B cell (primary cell): ENCODE measurements at regions of chr17 and their contacts with region 1.

Region 1: GRCh38 chr17:3845621-3846441 is at the start of gene NCBP3:
- DNase-seq: peak; percentile 96
- ATAC-seq: peak; percentile 97
- H3K4me3 ChIP-seq: peak within 1 kb of the TSS; percentile 54 to 96 (median 90)
- H3K4me3 Mint-ChIP-seq: peak within 1 kb of the TSS; percentile 92
- H3K27ac ChIP-seq: peak within 1 kb of the TSS; percentile 72 to 94
- H3K27ac Mint-ChIP-seq: peak within 1 kb of the TSS; percentile 86
- H3K4me1 ChIP-seq: peaks cover 10 to 20% of the 10 kb centered on the region in 2 donors
- H3K4me1 Mint-ChIP-seq: peaks cover 23% of the 10 kb centered on the region
- H3K27me3 ChIP-seq: no peaks in the 10 kb centered on the region
- H3K27me3 Mint-ChIP-seq: no peaks in the 10 kb centered on the region
- CTCF ChIP-seq: peak; percentile 90
- total RNA-seq, gene NCBP3: 70.7 and 71.7 TPM in 2 replicates

Region 2: DNA sequence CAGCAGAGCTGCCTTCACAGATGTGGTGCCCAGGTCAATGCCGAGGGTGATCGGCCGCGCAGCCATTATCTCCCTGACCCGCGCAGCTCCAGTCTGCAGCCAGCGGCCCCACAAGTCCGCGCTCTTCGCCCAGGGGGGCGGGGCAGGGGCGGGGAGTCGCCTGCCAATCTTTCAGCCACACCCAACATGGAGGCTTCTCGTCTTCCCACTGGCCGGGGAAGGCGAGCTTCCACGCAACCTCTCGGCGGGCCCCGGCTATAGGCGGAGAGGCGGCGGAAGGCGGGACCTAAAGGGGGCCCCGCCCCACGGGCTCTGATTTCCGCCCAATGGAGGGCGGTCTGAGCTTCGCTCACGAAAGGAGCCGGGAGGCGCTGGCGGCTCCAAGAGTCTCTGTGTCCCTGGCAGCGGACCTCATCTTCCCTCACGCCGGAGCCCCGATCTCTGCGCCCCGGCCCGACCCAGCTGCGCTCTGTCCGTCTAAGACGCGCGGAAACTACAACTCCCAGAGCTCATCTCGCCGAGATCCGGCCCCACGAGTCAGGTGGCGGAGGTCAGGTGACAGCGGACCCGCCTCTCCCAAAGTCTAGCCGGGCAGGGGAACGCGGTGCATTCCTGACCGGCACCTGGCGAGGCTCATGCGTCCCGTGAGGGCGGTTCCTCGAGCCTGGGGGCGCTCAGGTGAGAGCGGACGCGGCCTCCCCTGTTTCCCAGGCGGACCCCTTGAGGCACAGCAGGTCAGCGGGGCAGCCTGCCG is 209.5 kb before region 1 on chr17 and contains the starts of genes CTNS and SHPK:
- CTCF ChIA-PET with region 1: interaction called, 4 read pairs
- POLR2A ChIA-PET with region 1: no interaction called
- intact Hi-C with region 1: loop called (anchors 1 kb)
- DNase-seq: peak; percentile 97
- ATAC-seq: peak; percentile 97
- H3K4me3 ChIP-seq: peak within 1 kb of the TSS; percentile 48 to 80 (median 76)
- H3K4me3 Mint-ChIP-seq: peak within 1 kb of the TSS; percentile 99
- H3K27ac ChIP-seq: peak within 1 kb of the TSS; percentile 90 to 97
- H3K27ac Mint-ChIP-seq: peak within 1 kb of the TSS; percentile 100
- H3K4me1 ChIP-seq: peaks cover 4 to 15% of the 10 kb centered on the region in 2 donors
- H3K4me1 Mint-ChIP-seq: peaks cover 34% of the 10 kb centered on the region
- H3K27me3 ChIP-seq: no peaks in the 10 kb centered on the region
- H3K27me3 Mint-ChIP-seq: no peaks in the 10 kb centered on the region
- CTCF ChIP-seq: no peak
- total RNA-seq, gene CTNS: 23.1 and 24.7 TPM in 2 replicates
- total RNA-seq, gene SHPK: 16.1 and 17.5 TPM in 2 replicates

Region 3: GRCh38 chr17:3827124-3827773 is 18.6 kb before region 1 on chr17:
- CTCF ChIA-PET with region 1: interaction called, 22 read pairs
- POLR2A ChIA-PET with region 1: no interaction called
- intact Hi-C with region 1: no loop called
- DNase-seq: peak; percentile 80
- ATAC-seq: peak; percentile 62
- H3K4me3 ChIP-seq: no peak overlapping the region
- H3K4me3 Mint-ChIP-seq: no peak overlapping the region
- H3K27ac ChIP-seq: no peak overlapping the region
- H3K27ac Mint-ChIP-seq: no peak overlapping the region
- H3K4me1 ChIP-seq: no peaks in the 10 kb centered on the region
- H3K4me1 Mint-ChIP-seq: peaks cover 1% of the 10 kb centered on the region
- H3K27me3 ChIP-seq: no peaks in the 10 kb centered on the region
- H3K27me3 Mint-ChIP-seq: no peaks in the 10 kb centered on the region
- CTCF ChIP-seq: peak; percentile 95

Region 4: GRCh38 chr17:3893003-3893719 is 47.3 kb after region 1 on chr17 and contains the start of gene CAMKK1:
- CTCF ChIA-PET with region 1: interaction called, 6 read pairs
- POLR2A ChIA-PET with region 1: no interaction called
- intact Hi-C with region 1: loop called (anchors 1 kb)
- DNase-seq: peak; percentile 95
- ATAC-seq: peak; percentile 86
- H3K4me3 ChIP-seq: peak within 1 kb of the TSS; percentile 14 to 75 (median 64)
- H3K4me3 Mint-ChIP-seq: peak within 1 kb of the TSS; percentile 93
- H3K27ac ChIP-seq: peak within 1 kb of the TSS; percentile 56 to 57
- H3K27ac Mint-ChIP-seq: peak within 1 kb of the TSS; percentile 89
- H3K4me1 ChIP-seq: peaks cover 20 to 42% of the 10 kb centered on the region in 2 donors
- H3K4me1 Mint-ChIP-seq: peaks cover 40% of the 10 kb centered on the region
- H3K27me3 ChIP-seq: no peaks in the 10 kb centered on the region
- H3K27me3 Mint-ChIP-seq: no peaks in the 10 kb centered on the region
- CTCF ChIP-seq: no peak
- total RNA-seq, gene CAMKK1: 35.9 and 37.1 TPM in 2 replicates

Region 5: DNA sequence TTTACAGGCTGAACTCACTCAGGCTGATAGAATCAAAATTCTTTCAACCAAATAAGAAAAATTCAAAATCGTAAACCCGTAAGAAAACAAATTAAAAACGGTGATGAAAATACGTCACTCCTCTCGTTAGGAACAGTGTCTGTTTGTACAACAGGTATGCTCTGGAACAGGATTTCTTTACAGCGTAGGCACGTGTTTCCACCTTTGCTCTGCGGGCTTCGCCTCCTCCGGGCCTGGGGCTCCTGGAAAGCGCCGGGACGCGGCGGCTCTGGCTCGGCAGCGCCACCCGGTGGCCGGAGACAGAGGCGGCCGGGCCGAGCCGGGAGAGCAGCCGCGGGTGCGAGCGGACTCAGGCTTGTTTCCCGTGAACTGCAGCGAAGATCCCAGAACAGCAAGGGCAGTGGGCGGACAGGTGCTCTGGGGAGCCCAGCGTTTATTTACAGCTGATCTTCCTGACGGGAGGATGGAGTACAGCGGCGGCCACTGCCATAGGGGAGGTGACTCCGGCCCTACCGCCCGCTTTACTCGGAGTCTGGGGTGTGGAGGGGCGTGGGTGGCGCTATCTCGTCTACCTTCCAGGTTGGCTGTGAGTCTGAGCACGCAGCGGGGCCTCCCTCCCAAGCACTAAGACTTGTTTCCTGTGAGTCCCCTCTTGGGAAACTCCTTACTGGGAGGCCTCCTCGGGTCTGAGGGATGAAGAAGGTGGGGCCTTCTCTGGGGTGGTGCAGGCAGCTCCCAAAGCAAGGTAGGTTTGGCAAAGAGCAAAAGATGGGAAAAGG is 158.9 kb after region 1 on chr17:
- CTCF ChIA-PET with region 1: interaction called, 39 read pairs
- POLR2A ChIA-PET with region 1: no interaction called
- intact Hi-C with region 1: loop called (anchors 5 kb)
- DNase-seq: peak; percentile 80
- ATAC-seq: peak; percentile 71
- H3K4me3 ChIP-seq: no peak overlapping the region
- H3K4me3 Mint-ChIP-seq: peak overlapping the region; percentile 20
- H3K27ac ChIP-seq: no peak overlapping the region
- H3K27ac Mint-ChIP-seq: no peak overlapping the region
- H3K4me1 ChIP-seq: peaks cover 16 to 35% of the 10 kb centered on the region in 2 donors
- H3K4me1 Mint-ChIP-seq: peaks cover 27% of the 10 kb centered on the region
- H3K27me3 ChIP-seq: no peaks in the 10 kb centered on the region
- H3K27me3 Mint-ChIP-seq: no peaks in the 10 kb centered on the region
- CTCF ChIP-seq: peak; percentile 98

Region 6: DNA sequence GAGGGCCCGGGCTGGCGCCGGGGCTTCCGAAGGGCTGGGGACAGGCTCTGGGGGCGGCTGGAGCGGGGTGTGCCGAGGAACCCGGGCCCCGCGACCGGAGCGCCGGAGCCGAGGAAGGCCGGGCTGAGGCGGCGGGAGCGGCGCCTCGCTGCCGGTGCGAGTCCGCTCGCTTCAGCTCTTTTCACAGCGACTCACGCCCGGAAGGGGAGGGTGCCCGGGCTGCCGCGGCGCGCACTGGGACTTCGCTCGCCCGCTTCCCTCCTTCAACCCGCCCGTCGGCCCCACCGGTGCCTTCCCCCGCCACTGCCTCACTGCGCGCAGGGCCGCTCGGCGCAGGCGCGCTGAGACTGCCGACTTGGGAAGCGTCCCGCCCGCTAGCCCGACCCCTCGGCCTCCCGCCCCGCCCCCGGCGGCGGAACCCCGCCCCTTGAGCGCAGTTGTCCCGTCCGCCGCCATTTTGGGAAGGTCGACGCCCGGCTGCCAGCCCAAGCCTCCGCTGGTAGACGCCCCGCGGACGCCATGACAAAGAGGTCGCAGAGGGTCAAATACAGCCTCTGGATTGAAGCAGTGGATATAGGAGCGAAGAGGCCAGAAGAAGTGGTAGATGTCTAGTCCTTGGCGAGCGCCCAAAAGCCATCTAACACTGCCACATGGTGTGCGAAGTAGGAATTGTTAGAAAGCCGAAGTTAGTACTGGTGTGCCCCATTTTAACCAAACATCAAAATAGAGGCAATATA is 520.7 kb after region 1 on chr17 and contains the start of gene UBE2G1:
- CTCF ChIA-PET with region 1: no interaction called
- POLR2A ChIA-PET with region 1: no interaction called
- intact Hi-C with region 1: loop called (anchors 5 kb)
- DNase-seq: peak; percentile 99
- ATAC-seq: peak; percentile 81
- H3K4me3 ChIP-seq: peak within 1 kb of the TSS; percentile 50 to 97 (median 90)
- H3K4me3 Mint-ChIP-seq: peak within 1 kb of the TSS; percentile 87
- H3K27ac ChIP-seq: peak within 1 kb of the TSS; percentile 63 to 89
- H3K27ac Mint-ChIP-seq: peak within 1 kb of the TSS; percentile 93
- H3K4me1 ChIP-seq: peaks cover 10 to 34% of the 10 kb centered on the region in 2 donors
- H3K4me1 Mint-ChIP-seq: peaks cover 44% of the 10 kb centered on the region
- H3K27me3 ChIP-seq: no peaks in the 10 kb centered on the region
- H3K27me3 Mint-ChIP-seq: no peaks in the 10 kb centered on the region
- CTCF ChIP-seq: no peak
- total RNA-seq, gene UBE2G1: 76.0 and 78.1 TPM in 2 replicates